Activated CD4-positive, alpha-beta T cell treated with anti-CD3 and anti-CD28 coated beads, Interleukin-2, amount 10 ng/mL, durations not matched to agents 24 days and 14 days (primary cell): ENCODE measurements at regions of chr15 and their contacts with region 1.

Region 1: DNA sequence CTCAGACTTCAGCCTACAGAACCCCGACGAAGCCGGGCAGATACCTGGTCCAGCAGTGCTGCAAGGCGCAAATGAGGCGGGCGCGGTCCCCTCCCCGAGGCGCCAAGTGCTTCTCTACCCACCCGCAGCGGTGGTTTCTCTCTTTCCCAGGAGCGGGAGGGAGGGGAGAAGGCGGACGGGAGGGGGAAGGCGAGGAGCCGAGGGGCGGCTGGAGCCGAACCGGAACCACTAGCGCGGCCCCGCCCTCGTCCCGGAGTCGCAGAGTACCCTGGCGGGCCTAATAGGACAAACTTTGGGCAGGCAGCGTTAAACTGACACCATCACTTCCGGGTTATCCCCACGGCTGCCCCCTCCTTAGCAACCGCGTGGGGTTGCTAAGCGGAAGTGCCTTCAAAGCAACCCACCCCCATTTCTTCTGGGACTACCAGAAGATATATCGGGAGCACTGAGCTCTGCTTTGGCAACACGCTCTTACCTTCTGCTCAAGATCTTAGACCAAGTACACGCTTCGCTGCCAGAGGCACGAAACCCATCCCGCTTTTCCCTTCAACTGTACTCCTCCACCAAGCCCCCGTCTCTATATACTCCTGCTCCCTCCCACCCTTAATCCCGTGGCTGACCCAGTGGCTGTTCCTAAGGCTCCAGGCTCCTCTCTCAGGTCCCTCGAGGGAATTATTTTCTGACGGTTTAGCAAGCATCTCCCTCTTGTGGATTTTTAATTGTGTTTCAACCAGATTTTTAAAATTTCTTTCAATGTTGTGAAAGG is at the start of gene CSNK1G1:
- DNase-seq: peak; percentile 97
- H3K4me3 Mint-ChIP-seq: peak within 1 kb of the TSS; percentile 89
- H3K27ac Mint-ChIP-seq: peak within 1 kb of the TSS; percentile 97
- H3K4me1 Mint-ChIP-seq: peaks cover 17% of the 10 kb centered on the region
- H3K27me3 Mint-ChIP-seq: no peaks in the 10 kb centered on the region
- total RNA-seq, gene CSNK1G1: 28.5 and 28.6 TPM in 2 replicates

Region 2: GRCh38 chr15:64162870-64163658 is 193.1 kb before region 1 on chr15 and contains the start of gene PPIB:
- intact Hi-C with region 1: loop called (anchors 1 kb)
- DNase-seq: peak; percentile 99
- H3K4me3 Mint-ChIP-seq: peak within 1 kb of the TSS; percentile 97
- H3K27ac Mint-ChIP-seq: peak within 1 kb of the TSS; percentile 95
- H3K4me1 Mint-ChIP-seq: peaks cover 48% of the 10 kb centered on the region
- H3K27me3 Mint-ChIP-seq: no peaks in the 10 kb centered on the region
- total RNA-seq, gene PPIB: 384 and 397 TPM in 2 replicates

Region 3: GRCh38 chr15:64209680-64210334 is 146.3 kb before region 1 on chr15:
- intact Hi-C with region 1: loop called (anchors 2 kb)
- DNase-seq: peak; percentile 60
- H3K4me3 Mint-ChIP-seq: no peak overlapping the region
- H3K27ac Mint-ChIP-seq: no peak overlapping the region
- H3K4me1 Mint-ChIP-seq: no peaks in the 10 kb centered on the region
- H3K27me3 Mint-ChIP-seq: no peaks in the 10 kb centered on the region

Region 4: DNA sequence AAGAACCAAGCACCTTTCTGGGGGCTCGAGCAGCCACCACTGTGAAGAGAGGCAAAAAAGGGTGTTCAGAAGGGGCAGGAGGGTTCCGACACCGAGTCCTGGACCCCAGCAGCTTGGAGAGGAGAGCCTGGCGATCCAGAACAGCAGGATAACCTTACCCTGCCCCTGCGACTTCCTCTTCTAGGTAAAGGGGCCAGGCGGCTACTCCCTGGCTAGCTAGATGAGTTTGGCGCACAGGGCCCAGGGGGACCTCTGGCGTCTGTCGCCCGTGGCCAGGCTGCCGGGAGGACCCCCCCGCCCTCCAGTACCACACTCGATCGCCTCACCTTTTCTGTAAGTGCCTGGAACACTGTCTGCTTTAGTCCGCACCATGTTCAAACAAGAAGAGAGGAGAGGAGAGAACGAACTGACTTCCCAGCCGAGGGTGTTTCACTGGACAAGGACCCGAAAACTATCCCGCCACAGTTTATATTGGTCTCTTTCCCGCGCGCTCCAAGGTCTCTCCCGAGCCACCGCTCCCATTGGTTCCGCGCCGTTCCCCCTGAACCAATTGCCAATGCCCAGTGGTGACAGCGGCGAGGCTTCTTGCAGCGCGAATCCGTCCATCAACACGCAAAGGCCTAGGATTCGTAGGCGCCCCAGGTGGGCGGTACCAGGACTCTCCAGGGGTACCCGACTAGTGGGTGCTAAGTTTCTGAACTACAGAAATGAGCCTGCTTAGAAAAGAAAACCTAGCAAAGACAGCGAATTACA is 25.0 kb after region 1 on chr15 and contains the start of gene PCLAF:
- intact Hi-C with region 1: loop called (anchors 2 kb)
- DNase-seq: peak; percentile 98
- H3K4me3 Mint-ChIP-seq: peak within 1 kb of the TSS; percentile 89
- H3K27ac Mint-ChIP-seq: peak within 1 kb of the TSS; percentile 86
- H3K4me1 Mint-ChIP-seq: peaks cover 18% of the 10 kb centered on the region
- H3K27me3 Mint-ChIP-seq: no peaks in the 10 kb centered on the region
- total RNA-seq, gene PCLAF: 67.6 and 81.9 TPM in 2 replicates

Region 5: DNA sequence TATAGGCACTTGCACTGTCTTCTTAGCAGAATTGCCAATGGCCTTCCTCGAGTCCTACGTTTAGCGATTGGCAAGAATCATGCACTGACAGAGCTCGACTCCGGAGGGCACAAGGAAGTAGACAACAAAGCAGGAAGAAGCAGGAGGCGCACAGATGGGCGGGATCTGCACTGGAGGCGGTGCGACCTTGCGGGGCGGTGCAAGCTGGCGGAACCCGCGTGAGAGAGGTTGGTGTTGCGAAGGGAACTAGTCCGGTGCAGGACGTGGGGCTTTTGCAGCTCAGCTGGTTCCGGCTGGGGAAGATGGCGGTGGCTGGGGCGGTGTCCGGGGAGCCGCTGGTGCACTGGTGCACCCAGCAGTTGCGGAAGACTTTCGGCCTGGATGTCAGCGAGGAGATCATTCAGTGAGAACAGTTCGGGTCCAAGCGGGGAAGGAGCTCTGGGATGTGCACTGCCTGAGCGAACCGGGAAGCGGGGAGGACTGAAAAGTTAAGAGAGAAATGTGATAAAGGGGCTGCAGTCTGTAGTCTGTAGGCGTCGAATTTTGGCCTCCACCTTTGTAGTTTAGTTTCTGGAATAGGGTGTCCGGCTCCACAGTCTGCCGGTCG is 31.5 kb after region 1 on chr15 and contains the start of gene TRIP4:
- intact Hi-C with region 1: loop called (anchors 1 kb)
- DNase-seq: peak; percentile 99
- H3K4me3 Mint-ChIP-seq: peak within 1 kb of the TSS; percentile 97
- H3K27ac Mint-ChIP-seq: peak within 1 kb of the TSS; percentile 93
- H3K4me1 Mint-ChIP-seq: peaks cover 13% of the 10 kb centered on the region
- H3K27me3 Mint-ChIP-seq: no peaks in the 10 kb centered on the region
- total RNA-seq, gene TRIP4: 21.1 and 23.9 TPM in 2 replicates